GM12878 (cell line): ENCODE measurements at regions of chr12 and their contacts with region 1.

Region 1: DNA sequence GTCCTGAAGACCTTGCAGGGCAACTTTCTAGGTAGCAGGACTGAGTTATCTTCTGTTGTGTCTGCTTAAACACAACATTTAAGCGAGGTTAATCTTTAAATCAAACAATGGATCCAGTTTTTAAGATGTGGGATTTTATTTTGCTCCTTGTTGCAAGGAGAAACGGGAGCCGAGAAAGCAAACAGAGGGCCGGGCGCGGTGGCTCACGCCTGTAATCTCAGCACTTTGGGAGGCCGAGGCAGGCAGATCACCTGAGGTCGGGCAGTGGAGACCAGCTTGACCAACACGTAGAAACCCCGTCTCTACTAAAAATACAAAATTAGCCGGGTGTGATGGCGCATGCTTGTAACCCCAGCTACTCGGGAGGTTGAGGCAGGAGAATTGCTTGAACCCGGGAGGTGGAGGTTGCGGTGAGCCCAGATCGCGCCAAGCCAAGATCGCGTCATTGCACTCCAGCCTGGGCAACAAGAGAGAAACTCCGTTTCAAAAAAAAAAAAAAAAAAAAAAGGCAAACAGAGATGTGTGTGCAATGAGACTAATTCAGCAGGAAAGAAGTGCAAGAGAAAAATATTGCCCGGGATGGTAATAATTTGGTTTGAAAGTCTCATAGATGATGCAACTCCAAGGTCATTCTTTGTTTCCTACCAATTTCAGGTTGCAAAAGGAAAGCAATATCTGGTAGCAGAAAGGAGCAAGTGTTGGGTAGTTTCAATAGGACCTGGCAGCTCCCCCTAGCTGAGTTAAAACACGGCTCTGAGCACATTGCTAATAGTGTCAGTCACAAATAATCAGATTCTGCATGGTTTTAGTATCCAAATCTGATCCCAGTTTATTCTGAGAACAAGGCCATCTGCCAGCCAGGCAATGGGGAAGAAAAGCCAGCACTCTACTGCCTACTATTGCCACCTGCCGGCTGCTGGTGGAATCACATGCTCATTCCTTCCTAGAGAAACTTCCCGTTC is 141.4 kb downstream of the PPM1H start:
- DNase-seq: peak; percentile 27
- ATAC-seq: peak; percentile 84
- H3K4me3 ChIP-seq: no peak overlapping the region
- H3K27ac ChIP-seq: no peak overlapping the region
- H3K4me1 ChIP-seq: no peaks in the 10 kb centered on the region
- H3K27me3 ChIP-seq: no peaks in the 10 kb centered on the region
- CTCF ChIP-seq: peak; percentile 89 to 96 (median 96)
- EP300 ChIP-seq: no peak
- POLR2A ChIP-seq: no peak
- RAD21 ChIP-seq: peak; percentile 98

Region 2: GRCh38 chr12:62562846-62563245 is 230.7 kb before region 1 on chr12:
- CTCF ChIA-PET with region 1: interaction called, 11 read pairs
- POLR2A ChIA-PET with region 1: no interaction called
- RAD21 ChIA-PET with region 1: no interaction called
- SMC1A ChIA-PET with region 1: no interaction called
- in situ Hi-C with region 1: no loop called
- intact Hi-C with region 1: no loop called
- DNase-seq: no peak
- ATAC-seq: no peak
- H3K4me3 ChIP-seq: no peak overlapping the region
- H3K27ac ChIP-seq: no peak overlapping the region
- H3K4me1 ChIP-seq: no peaks in the 10 kb centered on the region
- H3K27me3 ChIP-seq: no peaks in the 10 kb centered on the region
- CTCF ChIP-seq: no peak
- EP300 ChIP-seq: no peak
- POLR2A ChIP-seq: no peak
- RAD21 ChIP-seq: no peak

Region 3: DNA sequence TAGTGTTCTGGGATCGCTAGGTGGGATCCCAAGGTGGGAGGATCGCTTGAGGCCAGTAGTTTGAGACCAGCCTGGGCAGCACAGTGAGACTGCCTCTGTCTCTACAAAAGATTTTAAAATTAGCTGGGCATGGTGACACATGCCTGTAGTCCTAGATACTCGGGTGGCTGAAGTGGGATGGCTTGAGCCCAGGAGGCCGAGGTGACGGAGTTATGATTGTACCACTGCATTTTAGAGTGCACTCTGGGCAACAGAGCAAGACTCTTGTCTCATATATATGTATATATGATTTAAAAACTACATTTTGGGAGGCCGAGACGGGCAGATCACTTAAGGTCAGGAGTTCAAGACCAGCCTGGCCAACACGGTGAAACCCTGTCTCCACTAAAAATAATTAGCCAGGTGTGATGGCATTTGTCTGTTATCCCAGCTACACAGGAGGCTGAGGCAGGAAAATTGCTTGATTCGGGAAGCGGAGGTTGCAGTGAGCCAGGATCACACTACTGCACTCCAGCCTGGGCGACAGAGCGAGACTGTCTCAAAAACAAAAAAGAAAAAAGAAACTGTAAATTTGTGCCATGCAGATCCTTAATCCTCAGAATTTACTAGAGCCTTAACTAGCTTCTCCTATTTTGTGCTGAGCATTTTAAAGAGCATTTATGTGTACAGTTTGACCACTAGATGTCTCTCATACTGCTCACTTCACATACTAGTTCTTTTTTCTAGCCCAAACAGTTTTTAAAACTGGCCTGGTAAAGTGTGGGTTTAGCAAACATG is 212.1 kb before region 1 on chr12:
- CTCF ChIA-PET with region 1: interaction called, 314 read pairs
- POLR2A ChIA-PET with region 1: interaction called, 3 read pairs
- RAD21 ChIA-PET with region 1: interaction called, 118 read pairs
- SMC1A ChIA-PET with region 1: interaction called, 256 read pairs
- in situ Hi-C with region 1: loop called (anchors 5 kb)
- intact Hi-C with region 1: loop called (anchors 1 kb)
- DNase-seq: no peak
- ATAC-seq: peak; percentile 87
- H3K4me3 ChIP-seq: no peak overlapping the region
- H3K27ac ChIP-seq: no peak overlapping the region
- H3K4me1 ChIP-seq: no peaks in the 10 kb centered on the region
- H3K27me3 ChIP-seq: no peaks in the 10 kb centered on the region
- CTCF ChIP-seq: peak; percentile 49 to 66 (median 65); a peak in 4 of 6 replicates
- EP300 ChIP-seq: no peak
- POLR2A ChIP-seq: no peak
- RAD21 ChIP-seq: peak; percentile 81